ENCODE measurements at regions of chr10 and their contacts with region 1.

Region 1: DNA sequence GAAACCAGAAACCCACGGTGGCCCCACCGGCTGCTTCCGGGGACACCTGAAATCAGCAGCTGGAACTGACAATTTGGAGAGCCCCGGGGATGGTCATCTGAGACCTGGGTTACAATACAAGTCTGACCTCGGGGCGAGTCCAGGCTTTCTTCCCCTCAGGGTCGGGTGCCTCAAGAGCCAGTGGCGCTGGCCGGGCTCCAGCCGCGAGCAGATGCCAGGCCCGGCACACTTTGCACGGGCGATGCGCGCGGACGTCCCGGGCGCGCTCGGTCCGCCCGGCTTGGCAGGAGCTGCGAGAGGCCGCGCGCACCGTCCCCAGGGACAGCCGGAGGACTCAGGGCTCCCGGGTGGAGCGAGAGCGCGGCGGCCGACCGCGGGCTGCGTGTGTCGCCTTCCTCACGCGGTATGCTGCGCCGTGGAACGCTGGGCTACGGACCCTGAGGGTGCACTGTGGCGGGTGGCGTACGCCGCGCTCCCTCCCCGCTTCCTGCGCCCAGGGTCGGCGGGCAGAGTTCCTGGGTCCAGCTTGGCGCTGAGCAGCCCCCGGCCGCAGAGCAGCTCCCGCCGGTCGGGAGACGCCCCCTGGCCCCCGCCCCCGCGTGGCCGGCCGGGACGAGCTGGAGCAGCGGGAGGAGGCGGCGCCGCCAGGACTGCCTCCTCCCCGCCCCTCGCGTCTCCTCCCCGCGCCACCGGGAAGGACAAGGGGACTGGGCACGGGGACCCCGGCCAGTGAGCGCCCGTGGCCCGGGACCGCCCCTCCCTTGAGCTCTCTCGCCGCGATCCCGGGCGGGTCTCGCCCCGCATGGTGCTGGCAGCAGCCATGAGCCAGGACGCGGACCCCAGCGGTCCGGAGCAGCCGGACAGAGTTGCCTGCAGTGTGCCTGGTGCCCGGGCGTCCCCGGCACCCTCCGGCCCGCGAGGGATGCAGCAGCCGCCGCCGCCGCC is at the start of gene RBM20:
- DNase-seq: peak in 1 of 2 donors; percentile 80
- H3K4me3 ChIP-seq: peak within 1 kb of the TSS; percentile 61 to 96
- H3K27ac ChIP-seq: peak within 1 kb of the TSS; percentile 72 to 94
- H3K4me1 ChIP-seq: peaks cover 0 to 6% of the 10 kb centered on the region in 2 donors
- H3K27me3 ChIP-seq: no peaks in the 10 kb centered on the region
- CTCF ChIP-seq: no peak
- total RNA-seq, gene RBM20: 4.8 TPM

Region 2: GRCh38 chr10:110671788-110672579 is 28.1 kb after region 1 on chr10:
- intact Hi-C with region 1: loop called (anchors 1 kb)
- DNase-seq: peak; percentile 21 to 84
- H3K4me3 ChIP-seq: peak overlapping the region; percentile 68 to 73
- H3K27ac ChIP-seq: peak overlapping the region; percentile 71 to 80
- H3K4me1 ChIP-seq: peaks cover 0 to 9% of the 10 kb centered on the region in 2 donors
- H3K27me3 ChIP-seq: no peaks in the 10 kb centered on the region
- CTCF ChIP-seq: peak; percentile 83 to 94 (median 87)

Region 3: GRCh38 chr10:110681023-110681681 is 37.2 kb after region 1 on chr10:
- intact Hi-C with region 1: loop called (anchors 5 kb)
- DNase-seq: no peak
- H3K4me3 ChIP-seq: no peak overlapping the region
- H3K27ac ChIP-seq: peak overlapping the region in 1 of 2 donors; percentile 20
- H3K4me1 ChIP-seq: peaks cover 0 to 3% of the 10 kb centered on the region in 2 donors
- H3K27me3 ChIP-seq: no peaks in the 10 kb centered on the region
- CTCF ChIP-seq: peak in 2 of 3 experiments; percentile 48 to 58

Region 4: GRCh38 chr10:111410740-111411139 is 766.8 kb after region 1 on chr10:
- intact Hi-C with region 1: no loop called
- DNase-seq: no peak
- H3K4me3 ChIP-seq: no peak overlapping the region
- H3K27ac ChIP-seq: no peak overlapping the region
- H3K4me1 ChIP-seq: no peaks in the 10 kb centered on the region
- H3K27me3 ChIP-seq: no peaks in the 10 kb centered on the region
- CTCF ChIP-seq: no peak

Measured in ascending aorta (tissue), 2 donors.